Naive thymus-derived CD4-positive, alpha-beta T cell (primary cell): ENCODE measurements at regions of chr16 and their contacts with region 1.

Region 1: GRCh38 chr16:3074860-3075522 is 9.6 kb downstream of the IL32 start:
- DNase-seq: peak; percentile 44 to 92 (median 90)
- ATAC-seq: peak; percentile 95
- H3K4me3 ChIP-seq: peak overlapping the region; percentile 37
- H3K4me3 Mint-ChIP-seq: peak overlapping the region; percentile 69 to 89 (median 83)
- H3K27ac ChIP-seq: peak overlapping the region; percentile 78
- H3K27ac Mint-ChIP-seq: peak overlapping the region; percentile 92 to 99 (median 99)
- H3K4me1 ChIP-seq: peaks cover 73 to 82% of the 10 kb centered on the region in 2 donors
- H3K4me1 Mint-ChIP-seq: peaks cover 67 to 93% (median 78%) of the 10 kb centered on the region in 7 donors
- H3K27me3 ChIP-seq: no peaks in the 10 kb centered on the region
- H3K27me3 Mint-ChIP-seq: no peaks in the 10 kb centered on the region

Region 2: GRCh38 chr16:3087243-3088235 is 12.5 kb after region 1 on chr16:
- CTCF ChIA-PET with region 1: interaction called, 12 read pairs
- POLR2A ChIA-PET with region 1: interaction called, 15 read pairs
- intact Hi-C with region 1: no loop called
- DNase-seq: no peak
- ATAC-seq: peak; percentile 64
- H3K4me3 ChIP-seq: no peak overlapping the region
- H3K4me3 Mint-ChIP-seq: peak overlapping the region in 9 of 10 donors; percentile 32 to 76 (median 51)
- H3K27ac ChIP-seq: peak overlapping the region; percentile 22
- H3K27ac Mint-ChIP-seq: peak overlapping the region in 8 of 9 donors; percentile 14 to 88 (median 69)
- H3K4me1 ChIP-seq: peaks cover 12 to 26% of the 10 kb centered on the region in 2 donors
- H3K4me1 Mint-ChIP-seq: peaks cover 26 to 69% (median 56%) of the 10 kb centered on the region in 7 donors
- H3K27me3 ChIP-seq: no peaks in the 10 kb centered on the region
- H3K27me3 Mint-ChIP-seq: no peaks in the 10 kb centered on the region

Region 3: GRCh38 chr16:3099732-3100499 is 24.9 kb after region 1 on chr16:
- CTCF ChIA-PET with region 1: interaction called, 45 read pairs
- POLR2A ChIA-PET with region 1: interaction called, 95 read pairs
- intact Hi-C with region 1: loop called in 1 of 2 experiments (anchors 1 kb)
- DNase-seq: peak; percentile 67 to 94 (median 75)
- ATAC-seq: peak; percentile 94
- H3K4me3 ChIP-seq: peak overlapping the region; percentile 46
- H3K4me3 Mint-ChIP-seq: peak overlapping the region; percentile 71 to 98 (median 82)
- H3K27ac ChIP-seq: peak overlapping the region; percentile 35
- H3K27ac Mint-ChIP-seq: peak overlapping the region; percentile 74 to 93 (median 86)
- H3K4me1 ChIP-seq: peaks cover 25 to 31% of the 10 kb centered on the region in 2 donors
- H3K4me1 Mint-ChIP-seq: peaks cover 27 to 65% (median 54%) of the 10 kb centered on the region in 7 donors
- H3K27me3 ChIP-seq: no peaks in the 10 kb centered on the region
- H3K27me3 Mint-ChIP-seq: no peaks in the 10 kb centered on the region

Region 4: DNA sequence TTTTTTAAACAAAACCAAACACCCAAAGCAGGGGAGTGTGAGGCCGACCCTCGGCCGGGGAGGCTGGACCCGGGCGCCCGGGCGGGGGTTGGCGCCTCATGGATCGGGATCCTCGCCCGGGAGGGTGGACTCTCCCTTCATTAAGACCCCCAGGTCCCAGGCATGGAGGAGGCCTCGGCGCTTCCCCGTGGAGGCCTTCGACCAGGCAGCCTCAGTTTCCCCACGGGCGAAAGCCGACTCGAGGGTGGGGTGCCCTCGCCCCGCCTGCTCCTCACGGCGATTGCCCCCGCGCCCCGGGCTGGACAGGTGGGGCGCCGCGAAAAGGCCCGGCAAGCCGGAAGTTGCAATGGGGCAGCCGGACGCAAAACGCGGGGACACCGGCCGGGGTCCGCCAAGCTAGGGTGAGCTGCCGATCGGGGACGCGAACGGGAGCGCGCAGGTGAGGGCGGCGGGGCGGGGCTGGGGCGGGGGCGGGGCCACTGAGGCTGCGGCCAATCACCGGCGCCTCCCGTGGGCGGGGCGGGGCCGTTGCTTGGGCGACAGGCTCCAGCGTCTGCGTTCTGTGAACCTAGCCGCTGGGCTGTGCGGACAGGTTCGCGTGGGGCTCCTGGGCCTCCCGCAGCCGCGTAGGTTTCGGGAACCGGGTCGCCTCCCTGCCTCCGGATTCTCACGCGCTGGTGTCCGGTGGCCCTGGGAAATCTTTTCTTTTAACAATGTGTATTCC is 31.4 kb after region 1 on chr16:
- CTCF ChIA-PET with region 1: interaction called, 10 read pairs
- POLR2A ChIA-PET with region 1: interaction called, 95 read pairs
- intact Hi-C with region 1: no loop called
- DNase-seq: peak; percentile 77 to 92 (median 85)
- ATAC-seq: peak; percentile 97
- H3K4me3 ChIP-seq: peak overlapping the region; percentile 76
- H3K4me3 Mint-ChIP-seq: peak overlapping the region; percentile 83 to 94 (median 87)
- H3K27ac ChIP-seq: peak overlapping the region; percentile 89
- H3K27ac Mint-ChIP-seq: peak overlapping the region; percentile 82 to 96 (median 92)
- H3K4me1 ChIP-seq: peaks cover 13 to 23% of the 10 kb centered on the region in 2 donors
- H3K4me1 Mint-ChIP-seq: peaks cover 26 to 45% (median 35%) of the 10 kb centered on the region in 7 donors
- H3K27me3 ChIP-seq: no peaks in the 10 kb centered on the region
- H3K27me3 Mint-ChIP-seq: peaks cover 0 to 7% (median 0%) of the 10 kb centered on the region in 5 donors

Region 5: DNA sequence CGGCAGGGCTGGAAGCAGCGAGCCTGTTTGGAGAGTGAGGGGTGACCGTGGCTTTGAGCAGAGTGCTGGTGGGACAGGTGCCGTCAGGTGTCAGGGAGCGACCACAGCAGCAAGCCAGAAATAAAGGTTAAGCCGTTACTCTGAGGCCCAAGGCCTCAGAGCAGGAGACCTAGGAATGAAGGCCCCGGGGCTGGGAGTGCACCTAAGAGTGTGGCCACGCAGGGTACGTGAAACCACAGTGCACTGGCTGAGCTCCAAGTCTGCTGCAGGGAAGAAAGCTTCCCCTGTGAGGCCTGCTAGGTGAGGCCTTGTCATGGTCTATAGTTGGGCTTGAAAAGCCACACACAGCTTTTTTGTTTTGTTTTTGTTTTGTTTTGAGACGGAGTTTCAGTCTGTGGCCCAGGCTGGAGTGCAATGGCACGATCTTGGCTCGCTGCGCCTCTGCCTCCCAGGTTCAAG is 434.5 kb after region 1 on chr16:
- CTCF ChIA-PET with region 1: no interaction called
- POLR2A ChIA-PET with region 1: no interaction called
- intact Hi-C with region 1: loop called in 1 of 2 experiments (anchors 10 kb)
- DNase-seq: peak; percentile 41 to 84 (median 80)
- ATAC-seq: peak; percentile 99
- H3K4me3 ChIP-seq: peak overlapping the region; percentile 13
- H3K4me3 Mint-ChIP-seq: peak overlapping the region in 9 of 10 donors; percentile 21 to 75 (median 68)
- H3K27ac ChIP-seq: peak overlapping the region; percentile 73
- H3K27ac Mint-ChIP-seq: peak overlapping the region; percentile 84 to 98 (median 89)
- H3K4me1 ChIP-seq: peaks cover 23 to 44% of the 10 kb centered on the region in 2 donors
- H3K4me1 Mint-ChIP-seq: peaks cover 33 to 72% (median 62%) of the 10 kb centered on the region in 7 donors
- H3K27me3 ChIP-seq: no peaks in the 10 kb centered on the region
- H3K27me3 Mint-ChIP-seq: no peaks in the 10 kb centered on the region